ENCODE measurements at regions of chr19 and their contacts with region 1.

Region 1: DNA sequence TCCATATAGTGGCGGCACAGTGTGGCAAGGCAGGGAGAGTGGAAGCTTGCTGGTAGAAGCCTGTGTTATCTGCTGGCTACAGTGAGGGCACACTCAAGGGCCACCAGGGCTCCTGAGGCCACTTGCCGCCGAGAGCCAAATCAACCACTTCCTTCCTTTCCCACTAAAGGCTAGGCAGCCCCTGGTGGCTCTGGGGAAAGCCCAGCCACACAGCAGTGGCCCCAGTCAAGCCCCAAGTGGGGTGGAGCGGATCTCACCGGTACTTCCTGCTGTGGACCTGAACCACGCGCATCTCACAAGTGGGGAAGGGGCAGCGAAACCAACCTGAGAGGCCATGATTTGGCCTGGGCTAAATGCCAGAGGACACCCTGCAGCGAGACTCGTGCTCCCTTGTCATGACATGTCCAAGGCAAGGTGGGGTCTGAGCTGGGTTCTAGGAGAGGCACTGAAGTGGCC is 21.9 kb upstream of the SLC35E1 start:
- DNase-seq: peak; percentile 67
- H3K4me3 Mint-ChIP-seq: peak overlapping the region; percentile 74
- H3K27ac Mint-ChIP-seq: peak overlapping the region; percentile 85
- H3K4me1 Mint-ChIP-seq: peaks cover 75% of the 10 kb centered on the region
- H3K27me3 Mint-ChIP-seq: no peaks in the 10 kb centered on the region

Region 2: DNA sequence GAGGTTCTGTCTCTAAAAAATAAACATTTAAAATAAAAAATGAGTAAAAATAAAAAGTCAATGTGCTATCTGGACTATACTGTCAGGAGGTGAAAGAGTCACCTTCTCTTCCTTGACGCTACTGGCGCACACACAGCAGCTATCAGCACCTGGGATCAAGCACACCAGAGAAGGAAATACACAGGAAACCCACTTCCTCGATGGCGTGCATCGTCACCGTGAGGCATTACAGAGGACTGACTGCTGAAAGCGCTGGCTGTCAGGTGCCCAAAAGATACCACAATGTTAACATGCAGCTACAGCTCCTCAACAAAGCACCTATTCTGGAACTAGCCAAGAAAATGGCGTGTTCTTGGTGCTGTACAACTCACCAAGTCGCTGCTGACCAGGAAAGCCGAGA is 28.0 kb before region 1 on chr19:
- intact Hi-C with region 1: loop called (anchors 1 kb)
- DNase-seq: peak; percentile 81
- H3K4me3 Mint-ChIP-seq: peak overlapping the region; percentile 81
- H3K27ac Mint-ChIP-seq: peak overlapping the region; percentile 99
- H3K4me1 Mint-ChIP-seq: peaks cover 41% of the 10 kb centered on the region
- H3K27me3 Mint-ChIP-seq: no peaks in the 10 kb centered on the region

Region 3: GRCh38 chr19:16608290-16608739 is 14.2 kb after region 1 on chr19:
- intact Hi-C with region 1: loop called (anchors 1 kb)
- DNase-seq: no peak
- H3K4me3 Mint-ChIP-seq: no peak overlapping the region
- H3K27ac Mint-ChIP-seq: peak overlapping the region; percentile 34
- H3K4me1 Mint-ChIP-seq: peaks cover 54% of the 10 kb centered on the region
- H3K27me3 Mint-ChIP-seq: no peaks in the 10 kb centered on the region